ENCODE measurements at regions of chr5 and their contacts with region 1.

Region 1: DNA sequence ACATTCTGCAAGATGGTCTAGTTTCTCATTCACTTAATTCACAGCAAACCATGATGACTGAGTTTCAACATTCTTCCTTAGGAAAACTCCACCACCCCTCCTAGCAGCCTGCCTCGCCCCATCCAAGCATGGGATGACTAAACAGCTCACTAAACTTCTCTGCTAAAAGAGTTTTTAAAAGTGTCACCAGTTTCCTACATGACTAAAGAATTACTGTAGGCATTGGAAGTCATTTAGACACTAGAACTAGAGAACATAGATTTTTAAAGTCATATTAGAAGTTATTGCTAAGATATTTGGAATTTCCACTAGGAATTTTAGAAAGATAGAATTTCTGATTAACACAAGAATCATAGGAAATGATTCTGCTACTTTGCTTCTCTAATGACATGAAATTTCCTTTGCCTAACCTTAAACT is 5.5 kb upstream of the ESM1 start:
- DNase-seq: peak; percentile 71
- H3K4me3 ChIP-seq: no peak overlapping the region
- H3K27ac ChIP-seq: peak overlapping the region; percentile 82
- H3K4me1 ChIP-seq: peaks cover 71% of the 10 kb centered on the region
- H3K27me3 ChIP-seq: no peaks in the 10 kb centered on the region
- CTCF ChIP-seq: no peak
- POLR2A ChIP-seq: no peak

Region 2: DNA sequence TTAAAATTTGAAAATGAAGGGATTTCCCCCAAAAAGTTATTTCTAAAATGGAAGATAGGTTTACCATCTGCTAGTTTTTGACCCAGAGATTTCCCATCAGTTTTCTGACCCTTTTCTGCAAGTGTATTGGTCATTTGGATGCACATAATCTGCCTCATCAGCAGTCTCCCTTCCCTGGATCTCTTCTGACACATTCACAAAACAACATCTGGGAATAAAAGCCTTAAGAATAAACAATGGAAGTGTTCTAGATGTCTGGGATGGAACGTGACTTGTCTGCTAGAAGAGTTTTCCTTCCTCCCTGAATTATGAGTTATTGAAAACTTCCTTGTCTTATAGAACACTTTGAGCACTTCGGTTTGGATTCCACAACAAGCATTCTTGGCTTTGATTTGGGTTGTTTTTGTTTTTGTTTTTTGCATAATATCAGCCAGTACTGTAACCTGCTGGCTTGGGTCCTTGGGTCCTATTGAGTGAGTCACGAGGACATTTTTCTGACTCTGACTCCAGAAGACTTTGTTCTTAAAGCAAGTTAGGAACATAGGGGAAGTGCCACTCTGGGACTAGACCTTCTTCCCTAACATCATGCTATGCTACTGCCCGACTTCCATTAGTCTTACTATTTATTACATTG is 12.7 kb after region 1 on chr5:
- CTCF ChIA-PET with region 1: interaction called, 6 read pairs
- POLR2A ChIA-PET with region 1: interaction called, 8 read pairs
- dilution Hi-C with region 1: no loop called
- intact Hi-C with region 1: loop called (anchors 1 kb)
- DNase-seq: peak; percentile 57
- H3K4me3 ChIP-seq: no peak overlapping the region
- H3K27ac ChIP-seq: peak overlapping the region; percentile 89
- H3K4me1 ChIP-seq: peaks cover 43% of the 10 kb centered on the region
- H3K27me3 ChIP-seq: no peaks in the 10 kb centered on the region
- CTCF ChIP-seq: no peak
- POLR2A ChIP-seq: no peak

Region 3: DNA sequence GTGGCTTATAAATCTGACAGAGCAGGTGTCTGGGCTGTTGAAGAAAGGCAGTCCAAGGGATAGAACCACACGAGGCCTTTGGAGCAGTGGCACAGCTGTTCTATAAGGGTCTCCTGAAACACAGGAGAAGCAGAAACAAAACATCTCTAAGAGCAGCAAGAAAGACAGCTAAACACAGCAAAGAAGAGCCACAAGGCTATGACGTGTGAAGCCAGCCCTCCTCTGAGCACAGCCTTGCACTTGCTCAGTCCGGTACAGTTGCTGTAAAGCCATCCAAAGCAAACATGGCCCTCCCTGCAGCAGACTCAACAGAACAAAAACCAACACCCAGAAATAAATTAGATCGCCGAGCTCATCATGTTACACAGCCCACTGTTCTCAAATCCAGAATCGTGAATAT is 30.6 kb after region 1 on chr5:
- CTCF ChIA-PET with region 1: no interaction called
- POLR2A ChIA-PET with region 1: no interaction called
- dilution Hi-C with region 1: no loop called
- intact Hi-C with region 1: no loop called
- DNase-seq: no peak
- H3K4me3 ChIP-seq: no peak overlapping the region
- H3K27ac ChIP-seq: no peak overlapping the region
- H3K4me1 ChIP-seq: no peaks in the 10 kb centered on the region
- H3K27me3 ChIP-seq: no peaks in the 10 kb centered on the region
- CTCF ChIP-seq: no peak
- POLR2A ChIP-seq: no peak

Region 4: DNA sequence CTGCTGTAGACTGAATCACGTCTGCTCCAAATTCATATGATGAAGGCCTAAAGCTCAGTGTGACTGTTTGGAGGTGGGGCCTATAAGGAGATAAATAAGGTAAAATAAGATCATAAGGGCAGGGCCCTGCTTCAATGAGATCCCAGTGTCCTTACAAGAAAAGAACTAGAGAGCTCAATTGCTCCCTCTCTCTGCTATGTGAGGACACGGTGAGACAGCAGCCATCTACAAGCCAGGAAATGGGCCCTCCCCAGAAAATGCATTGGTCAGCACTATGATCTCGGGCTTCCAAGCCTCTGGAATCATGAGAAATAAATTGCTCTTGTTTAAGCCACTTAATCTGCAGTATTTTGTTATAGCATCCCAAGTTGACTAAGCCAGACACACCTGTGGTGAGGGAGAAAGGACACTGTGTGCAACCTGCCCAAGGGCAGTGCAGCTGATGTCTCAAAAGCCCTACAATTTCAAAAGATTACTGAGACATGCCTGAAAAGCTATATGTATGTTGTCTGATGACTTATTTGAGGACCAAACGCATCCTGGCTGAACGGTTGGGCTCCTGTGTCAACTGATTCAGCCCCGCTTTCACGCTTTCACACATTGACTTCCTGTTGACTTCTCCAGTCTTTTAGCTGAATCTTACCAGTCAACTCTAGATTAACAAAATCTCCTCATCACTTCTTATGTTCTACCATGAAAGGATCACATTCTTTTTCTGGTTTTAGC is 46.4 kb after region 1 on chr5:
- CTCF ChIA-PET with region 1: interaction called, 5 read pairs
- POLR2A ChIA-PET with region 1: no interaction called
- dilution Hi-C with region 1: no loop called
- intact Hi-C with region 1: loop called (anchors 2 kb)
- DNase-seq: peak; percentile 7
- H3K4me3 ChIP-seq: no peak overlapping the region
- H3K27ac ChIP-seq: no peak overlapping the region
- H3K4me1 ChIP-seq: no peaks in the 10 kb centered on the region
- H3K27me3 ChIP-seq: no peaks in the 10 kb centered on the region
- CTCF ChIP-seq: no peak
- POLR2A ChIP-seq: no peak

Measured in endothelial cell of umbilical vein (primary cell).